ENCODE measurements at regions of chr13 and their contacts with region 1.

Region 1: GRCh38 chr13:50081679-50082425 is 66.6 kb downstream of the KCNRG start:
- DNase-seq: peak; percentile 97
- H3K4me3 ChIP-seq: peak overlapping the region; percentile 94
- H3K27ac ChIP-seq: peak overlapping the region; percentile 79
- H3K27me3 ChIP-seq: no peaks in the 10 kb centered on the region
- CTCF ChIP-seq: peak; percentile 24; the same call in 1 of the 2 replicates

Region 2: GRCh38 chr13:49996951-49997895 is 84.6 kb before region 1 on chr13 and contains the start of gene TRIM13:
- CTCF ChIA-PET with region 1: interaction called, 36 read pairs
- POLR2A ChIA-PET with region 1: interaction called, 24 read pairs
- DNase-seq: peak; percentile 65
- H3K4me3 ChIP-seq: peak within 1 kb of the TSS; percentile 83
- H3K27ac ChIP-seq: peak within 1 kb of the TSS; percentile 96
- H3K27me3 ChIP-seq: no peaks in the 10 kb centered on the region
- CTCF ChIP-seq: peak; percentile 87
- polyA plus RNA-seq, gene TRIM13: 25.4 and 33.3 TPM in 2 replicates

Region 3: DNA sequence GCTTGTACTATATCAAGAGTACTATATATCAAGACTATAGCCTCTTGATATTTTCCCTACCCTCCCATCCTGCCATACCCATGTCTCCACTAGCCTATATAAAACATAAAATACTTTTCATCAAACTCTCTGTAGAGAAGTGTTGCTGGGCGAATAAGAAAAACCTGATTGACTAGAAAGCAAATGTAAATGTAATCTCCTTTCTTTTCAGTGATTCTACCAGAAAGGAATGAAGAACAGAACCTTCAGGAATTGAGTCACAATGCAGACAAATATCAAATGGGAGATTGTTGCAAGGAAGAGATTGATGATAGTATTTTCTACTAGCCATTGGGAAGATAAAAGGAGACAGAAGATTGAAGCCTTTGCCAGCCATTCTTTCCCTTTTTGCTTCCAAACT is 22.6 kb after region 1 on chr13:
- CTCF ChIA-PET with region 1: interaction called, 24 read pairs
- POLR2A ChIA-PET with region 1: no interaction called
- DNase-seq: no peak
- H3K4me3 ChIP-seq: no peak overlapping the region
- H3K27ac ChIP-seq: no peak overlapping the region
- H3K27me3 ChIP-seq: no peaks in the 10 kb centered on the region
- CTCF ChIP-seq: no peak

Region 4: GRCh38 chr13:50123862-50124536 is 42.1 kb after region 1 on chr13:
- CTCF ChIA-PET with region 1: interaction called, 5 read pairs
- POLR2A ChIA-PET with region 1: interaction called, 13 read pairs
- DNase-seq: peak; percentile 94
- H3K4me3 ChIP-seq: peak overlapping the region; percentile 88
- H3K27ac ChIP-seq: peak overlapping the region; percentile 98
- H3K27me3 ChIP-seq: peaks cover 15% of the 10 kb centered on the region
- CTCF ChIP-seq: 0 out of 2 replicates have a peak, but pooled peaks have one; percentile 7

Region 5: GRCh38 chr13:50801087-50801931 is 719.5 kb after region 1 on chr13:
- CTCF ChIA-PET with region 1: interaction called, 30 read pairs
- POLR2A ChIA-PET with region 1: no interaction called
- DNase-seq: peak; percentile 37
- H3K4me3 ChIP-seq: no peak overlapping the region
- H3K27ac ChIP-seq: no peak overlapping the region
- H3K27me3 ChIP-seq: no peaks in the 10 kb centered on the region
- CTCF ChIP-seq: peak; percentile 85

Region 6: DNA sequence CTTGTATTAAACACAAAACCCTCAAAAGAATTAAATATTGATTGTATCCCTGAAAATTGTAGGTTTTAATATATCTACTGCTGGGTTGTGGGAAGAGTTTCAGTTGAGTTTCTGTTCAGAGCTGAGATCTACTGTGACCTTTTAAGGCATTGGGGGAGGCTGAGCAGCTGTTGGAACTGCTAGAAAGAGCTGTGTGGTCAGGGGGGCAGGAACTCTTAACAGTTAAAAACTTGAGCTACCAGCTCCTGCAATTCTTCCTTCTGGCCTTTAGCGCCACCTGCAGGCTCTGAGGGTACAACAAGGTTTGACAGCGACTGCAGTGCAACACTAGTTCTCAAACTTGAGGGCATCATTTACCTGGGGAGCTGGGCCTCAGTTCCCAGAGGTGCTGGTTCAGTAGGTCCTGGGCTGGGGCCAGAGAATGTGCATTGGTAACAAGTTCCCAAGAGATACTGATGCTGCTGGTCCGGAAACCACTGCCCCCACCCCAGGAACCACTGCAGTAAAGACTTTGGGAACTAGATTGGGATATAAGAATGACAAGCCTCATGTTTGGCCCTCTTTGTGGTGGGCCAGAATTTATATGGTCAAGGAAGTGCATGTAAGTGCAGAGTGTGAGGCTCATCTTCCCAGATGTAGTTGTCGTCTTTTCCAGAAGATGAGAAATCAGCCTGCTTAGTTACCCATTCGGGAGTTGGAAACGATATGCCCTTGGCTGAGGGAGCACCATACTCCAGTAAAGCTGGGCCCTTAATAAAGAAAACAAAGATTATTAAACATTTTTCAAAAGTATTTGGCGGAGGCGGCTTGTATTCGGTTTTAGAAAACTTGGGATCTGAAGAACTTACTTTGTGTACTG is 830.3 kb after region 1 on chr13:
- CTCF ChIA-PET with region 1: interaction called, 11 read pairs
- POLR2A ChIA-PET with region 1: interaction called, 3 read pairs
- DNase-seq: peak; percentile 79
- H3K4me3 ChIP-seq: no peak overlapping the region
- H3K27ac ChIP-seq: no peak overlapping the region
- H3K27me3 ChIP-seq: no peaks in the 10 kb centered on the region
- CTCF ChIP-seq: peak; percentile 82

Measured in AG04450 (cell line).